PC-9 (cell line): ENCODE measurements at regions of chr4 and their contacts with region 1.

Region 1: GRCh38 chr4:5791654-5792053 is 80.7 kb downstream of the EVC start:
- DNase-seq: no peak
- H3K4me3 ChIP-seq: no peak overlapping the region
- H3K27ac ChIP-seq: no peak overlapping the region
- H3K4me1 ChIP-seq: no peaks in the 10 kb centered on the region
- H3K27me3 ChIP-seq: no peaks in the 10 kb centered on the region
- CTCF ChIP-seq: no peak

Region 2: GRCh38 chr4:4995103-4995907 is 796.3 kb before region 1 on chr4:
- CTCF ChIA-PET with region 1: no interaction called
- POLR2A ChIA-PET with region 1: no interaction called
- intact Hi-C with region 1: loop called (anchors 1 kb)
- DNase-seq: peak in 1 of 2 experiments; percentile 40
- H3K4me3 ChIP-seq: no peak overlapping the region
- H3K27ac ChIP-seq: no peak overlapping the region
- H3K4me1 ChIP-seq: peaks cover 8% of the 10 kb centered on the region
- H3K27me3 ChIP-seq: peaks cover 3% of the 10 kb centered on the region; the same call in 1 of the 2 replicates
- CTCF ChIP-seq: peak; percentile 81

Region 3: GRCh38 chr4:5399790-5400421 is 391.7 kb before region 1 on chr4:
- CTCF ChIA-PET with region 1: no interaction called
- POLR2A ChIA-PET with region 1: no interaction called
- intact Hi-C with region 1: loop called (anchors 2 kb)
- DNase-seq: peak in 1 of 2 experiments; percentile 5
- H3K4me3 ChIP-seq: no peak overlapping the region
- H3K27ac ChIP-seq: no peak overlapping the region
- H3K4me1 ChIP-seq: no peaks in the 10 kb centered on the region
- H3K27me3 ChIP-seq: peaks cover 27% of the 10 kb centered on the region
- CTCF ChIP-seq: peak; percentile 76